Activated CD4-positive, alpha-beta memory T cell treated with anti-CD3 and anti-CD28 coated beads, Interleukin-2, amount 10 ng/mL, durations not matched to agents 7 days and 5 days (primary cell): ENCODE measurements at regions of chr11 and their contacts with region 1.

Region 1: DNA sequence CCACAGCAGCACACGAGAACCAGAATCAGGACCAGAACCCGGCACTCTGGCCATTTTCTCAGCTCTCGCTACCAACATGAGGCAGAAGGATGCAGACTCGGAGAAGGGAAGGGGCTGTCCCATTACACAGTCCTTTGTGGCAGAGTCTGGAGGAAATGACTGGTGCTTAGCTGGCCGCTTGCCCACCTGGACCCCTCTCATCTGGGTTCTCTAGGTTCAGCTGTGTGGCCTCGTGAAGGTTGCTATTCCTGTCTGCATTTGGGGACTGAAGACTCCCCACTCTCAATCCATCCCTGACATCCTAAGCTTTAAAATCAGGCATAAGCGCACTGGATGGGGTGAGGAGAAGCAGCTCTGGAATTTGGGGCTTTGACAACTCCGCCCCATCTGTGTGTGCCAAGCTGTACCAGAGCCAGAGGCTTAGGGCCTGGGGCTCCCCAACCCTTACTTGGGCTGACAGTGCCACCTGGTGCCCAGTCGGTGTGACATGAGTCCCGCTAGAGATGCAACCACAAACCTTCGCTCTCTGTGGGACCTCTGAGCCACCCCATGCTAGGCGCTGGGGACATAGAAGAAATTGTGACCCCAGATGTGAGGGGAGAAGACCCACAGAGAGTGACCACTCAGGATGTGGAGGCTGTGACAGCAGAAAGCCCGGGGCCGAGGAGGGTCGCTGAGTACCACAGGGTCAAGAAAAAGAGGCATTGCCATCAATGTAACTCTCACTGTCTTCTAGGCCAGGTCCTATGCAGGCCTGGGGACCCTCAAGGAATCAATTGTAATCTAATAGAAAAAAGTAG is 35.9 kb upstream of the FCHSD2 start:
- DNase-seq: peak; percentile 86
- H3K4me3 Mint-ChIP-seq: no peak overlapping the region
- H3K27ac Mint-ChIP-seq: no peak overlapping the region
- H3K4me1 Mint-ChIP-seq: peaks cover 23% of the 10 kb centered on the region
- H3K27me3 Mint-ChIP-seq: peaks cover 32% of the 10 kb centered on the region

Region 2: DNA sequence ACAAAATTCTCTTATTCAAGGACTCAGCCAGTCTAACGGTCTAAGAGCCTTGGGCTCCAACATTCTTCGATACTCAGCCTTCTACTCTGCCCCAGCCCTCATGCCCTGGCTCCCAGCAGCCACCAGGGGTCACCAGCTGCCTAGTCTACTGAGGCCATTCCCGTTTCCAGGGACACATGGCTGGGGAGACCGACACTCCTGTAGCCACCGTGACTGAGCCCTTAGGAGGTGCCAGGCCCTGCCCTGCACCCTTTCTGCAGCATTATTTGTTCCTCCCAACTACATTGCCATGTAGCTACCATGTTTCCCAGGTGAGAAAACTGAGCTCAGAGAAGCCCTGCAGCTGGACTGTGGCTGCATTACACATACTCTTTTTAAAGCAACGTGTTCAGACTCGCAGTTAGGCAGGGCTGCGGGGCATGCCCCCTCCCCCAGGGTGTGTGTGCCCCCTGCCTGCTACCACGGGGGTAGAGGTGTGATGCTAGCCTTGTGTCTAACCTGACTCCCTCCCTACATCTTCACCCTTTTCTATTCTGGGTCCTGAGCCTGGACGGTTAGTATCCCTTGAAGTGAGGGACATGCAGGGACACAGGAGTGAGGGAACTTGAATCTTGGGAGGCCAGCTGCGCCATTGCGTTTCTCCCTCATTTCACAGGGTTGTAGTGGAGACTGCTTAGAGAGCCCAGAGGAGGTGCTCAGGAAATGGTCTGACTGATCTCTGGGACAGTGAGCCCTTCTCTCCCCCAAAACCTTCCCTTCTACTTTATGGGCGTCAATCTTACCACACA is 346.3 kb before region 1 on chr11:
- CTCF ChIA-PET with region 1: interaction called, 66 read pairs
- POLR2A ChIA-PET with region 1: interaction called, 8 read pairs
- DNase-seq: peak; percentile 57
- H3K4me3 Mint-ChIP-seq: no peak overlapping the region
- H3K27ac Mint-ChIP-seq: peak overlapping the region; percentile 36
- H3K4me1 Mint-ChIP-seq: peaks cover 36% of the 10 kb centered on the region
- H3K27me3 Mint-ChIP-seq: no peaks in the 10 kb centered on the region

Region 3: GRCh38 chr11:72924568-72925190 is 253.3 kb before region 1 on chr11:
- CTCF ChIA-PET with region 1: interaction called, 71 read pairs
- POLR2A ChIA-PET with region 1: interaction called, 3 read pairs
- DNase-seq: no peak
- H3K4me3 Mint-ChIP-seq: no peak overlapping the region
- H3K27ac Mint-ChIP-seq: no peak overlapping the region
- H3K4me1 Mint-ChIP-seq: peaks cover 4% of the 10 kb centered on the region
- H3K27me3 Mint-ChIP-seq: no peaks in the 10 kb centered on the region

Region 4: DNA sequence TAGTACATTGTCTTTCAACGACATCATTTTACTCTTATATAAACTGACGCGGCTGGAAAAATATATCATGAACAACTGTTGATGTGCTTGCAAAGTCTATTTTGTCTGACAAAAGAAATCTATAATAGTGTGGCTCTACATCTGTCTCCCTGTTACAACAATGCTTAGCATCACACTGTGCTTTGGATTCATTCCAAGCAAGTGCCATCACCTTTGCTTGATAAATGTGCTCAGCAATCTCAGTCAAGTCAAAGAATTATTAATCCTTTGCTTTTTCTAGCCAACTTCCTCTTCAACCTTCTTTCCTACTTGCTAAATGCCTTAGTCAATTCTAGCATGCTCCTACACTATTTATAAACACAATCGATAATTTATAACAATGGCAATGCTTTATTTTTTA is 176.4 kb before region 1 on chr11:
- CTCF ChIA-PET with region 1: no interaction called
- POLR2A ChIA-PET with region 1: no interaction called
- DNase-seq: no peak
- H3K4me3 Mint-ChIP-seq: no peak overlapping the region
- H3K27ac Mint-ChIP-seq: no peak overlapping the region
- H3K4me1 Mint-ChIP-seq: no peaks in the 10 kb centered on the region
- H3K27me3 Mint-ChIP-seq: no peaks in the 10 kb centered on the region

Region 5: GRCh38 chr11:73141848-73142286 is 36.1 kb before region 1 on chr11:
- CTCF ChIA-PET with region 1: interaction called, 23 read pairs
- POLR2A ChIA-PET with region 1: interaction called, 18 read pairs
- DNase-seq: peak; percentile 66
- H3K4me3 Mint-ChIP-seq: peak overlapping the region; percentile 97
- H3K27ac Mint-ChIP-seq: peak overlapping the region; percentile 86
- H3K4me1 Mint-ChIP-seq: peaks cover 46% of the 10 kb centered on the region
- H3K27me3 Mint-ChIP-seq: no peaks in the 10 kb centered on the region

Region 6: GRCh38 chr11:73157053-73158010 is 20.6 kb before region 1 on chr11:
- CTCF ChIA-PET with region 1: interaction called, 13 read pairs
- POLR2A ChIA-PET with region 1: interaction called, 5 read pairs
- DNase-seq: no peak
- H3K4me3 Mint-ChIP-seq: no peak overlapping the region
- H3K27ac Mint-ChIP-seq: no peak overlapping the region
- H3K4me1 Mint-ChIP-seq: peaks cover 40% of the 10 kb centered on the region
- H3K27me3 Mint-ChIP-seq: peaks cover 4% of the 10 kb centered on the region